BJ (cell line): ENCODE measurements at regions of chr5 and their contacts with region 1.

Region 1: GRCh38 chr5:150801117-150801927 is 22.8 kb downstream of the SMIM3 start:
- DNase-seq: peak; percentile 26
- H3K4me3 ChIP-seq: peak overlapping the region; percentile 10; the same call in 1 of the 2 replicates
- H3K27me3 ChIP-seq: no peaks in the 10 kb centered on the region
- CTCF ChIP-seq: peak; percentile 67

Region 2: GRCh38 chr5:150665044-150665443 is 136.3 kb before region 1 on chr5:
- CTCF ChIA-PET with region 1: no interaction called
- POLR2A ChIA-PET with region 1: no interaction called
- DNase-seq: no peak
- H3K4me3 ChIP-seq: no peak overlapping the region
- H3K27me3 ChIP-seq: peaks cover 13% of the 10 kb centered on the region
- CTCF ChIP-seq: no peak

Region 3: DNA sequence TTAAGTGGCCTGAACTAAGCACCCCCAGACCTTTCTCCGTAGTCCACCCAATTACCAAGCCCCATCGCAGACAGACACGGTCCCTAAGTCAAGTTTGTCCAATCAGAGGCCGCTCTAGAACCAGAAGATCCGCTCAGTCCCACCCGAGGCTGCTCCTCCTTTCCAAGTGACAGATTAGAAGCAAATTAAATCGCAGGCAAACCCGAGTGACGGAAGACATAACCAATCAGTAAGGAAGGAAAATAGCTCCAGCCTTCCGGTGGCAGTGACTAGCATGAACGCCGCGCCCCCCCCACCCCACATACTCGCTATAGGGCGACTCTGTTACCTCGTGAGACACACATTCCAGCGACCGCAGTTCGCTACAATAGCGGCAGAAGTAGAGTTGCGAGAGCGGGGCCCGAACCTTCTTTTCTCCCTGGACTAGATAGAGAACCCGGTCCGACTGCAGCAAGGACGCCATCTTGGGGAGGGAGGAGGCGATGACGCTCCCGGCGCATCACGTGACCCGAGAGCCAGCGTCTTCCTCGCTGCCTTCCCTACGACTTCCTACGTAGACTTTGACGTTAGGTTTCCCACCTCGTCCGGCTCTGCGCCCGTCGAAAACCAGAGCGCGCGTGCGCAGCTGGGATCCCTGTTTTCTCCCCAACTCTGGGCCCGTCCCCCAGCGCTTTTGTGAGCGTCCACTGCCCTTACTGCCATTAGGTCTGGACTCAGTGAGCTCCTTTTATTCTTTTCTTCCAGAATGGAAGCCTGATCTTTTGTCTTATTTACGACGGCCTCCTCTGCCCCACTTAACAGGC is 42.6 kb before region 1 on chr5 and contains the start of gene DCTN4:
- CTCF ChIA-PET with region 1: interaction called, 13 read pairs
- POLR2A ChIA-PET with region 1: no interaction called
- DNase-seq: peak; percentile 96
- H3K4me3 ChIP-seq: peak within 1 kb of the TSS; percentile 65
- H3K27me3 ChIP-seq: no peaks in the 10 kb centered on the region
- CTCF ChIP-seq: no peak
- polyA plus RNA-seq, gene DCTN4: 50.2 and 54.8 TPM in 2 replicates

Region 4: DNA sequence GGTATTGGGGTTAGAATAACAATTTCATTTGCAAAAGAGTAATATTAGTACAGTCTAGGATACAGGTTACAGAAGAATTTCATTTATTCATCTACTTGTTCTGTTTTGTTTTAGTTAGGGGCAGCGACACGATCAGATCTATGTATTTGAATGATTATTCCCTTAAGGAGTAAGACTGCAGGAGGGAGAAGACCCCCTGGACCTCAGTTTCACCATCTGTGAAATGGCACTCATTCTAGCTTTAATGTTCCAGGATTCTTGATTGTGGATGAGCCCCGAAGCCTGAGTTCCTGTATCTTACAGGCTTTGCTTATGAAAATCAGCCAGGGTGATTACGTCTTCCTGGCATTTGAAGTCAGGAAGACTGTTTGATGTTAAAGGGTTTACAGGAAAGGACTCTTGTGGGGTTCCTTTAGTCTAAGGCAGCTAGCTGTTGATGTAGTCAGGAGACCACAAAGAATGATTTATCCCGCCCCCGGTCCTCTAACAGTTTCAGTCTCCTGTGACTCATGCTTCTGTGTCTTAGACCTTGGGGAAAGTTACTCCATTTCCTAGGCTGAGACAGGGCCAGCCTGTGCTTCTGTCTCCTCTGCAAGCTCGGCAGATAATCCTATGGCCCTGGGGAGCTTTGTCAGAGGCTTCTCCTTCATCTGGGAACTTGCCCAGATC is 11.2 kb before region 1 on chr5:
- CTCF ChIA-PET with region 1: interaction called, 36 read pairs
- POLR2A ChIA-PET with region 1: no interaction called
- DNase-seq: peak; percentile 92
- H3K4me3 ChIP-seq: no peak overlapping the region
- H3K27me3 ChIP-seq: no peaks in the 10 kb centered on the region
- CTCF ChIP-seq: no peak

Region 5: DNA sequence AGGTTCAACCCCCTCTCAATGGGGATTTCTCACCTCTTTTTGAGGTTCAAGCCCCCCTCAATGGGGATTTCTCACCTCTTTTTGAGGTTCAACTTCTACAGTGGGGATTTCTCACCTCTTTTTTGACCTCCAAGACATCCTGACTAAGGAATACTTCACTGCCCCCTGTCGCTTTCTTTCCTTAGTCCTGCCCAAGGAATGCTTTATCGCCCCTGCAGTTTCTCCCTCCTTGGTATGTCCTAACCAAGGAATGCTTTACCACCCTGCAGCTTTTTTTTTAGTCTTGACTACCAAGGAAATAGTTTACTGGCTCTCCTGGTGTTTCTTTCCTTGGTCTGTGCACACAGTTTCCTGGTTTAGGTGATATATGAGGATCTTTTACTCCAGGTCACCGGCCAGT is 35.4 kb after region 1 on chr5:
- CTCF ChIA-PET with region 1: interaction called, 5 read pairs
- POLR2A ChIA-PET with region 1: interaction called, 10 read pairs
- DNase-seq: no peak
- H3K4me3 ChIP-seq: no peak overlapping the region
- H3K27me3 ChIP-seq: peaks cover 6% of the 10 kb centered on the region
- CTCF ChIP-seq: no peak

Region 6: DNA sequence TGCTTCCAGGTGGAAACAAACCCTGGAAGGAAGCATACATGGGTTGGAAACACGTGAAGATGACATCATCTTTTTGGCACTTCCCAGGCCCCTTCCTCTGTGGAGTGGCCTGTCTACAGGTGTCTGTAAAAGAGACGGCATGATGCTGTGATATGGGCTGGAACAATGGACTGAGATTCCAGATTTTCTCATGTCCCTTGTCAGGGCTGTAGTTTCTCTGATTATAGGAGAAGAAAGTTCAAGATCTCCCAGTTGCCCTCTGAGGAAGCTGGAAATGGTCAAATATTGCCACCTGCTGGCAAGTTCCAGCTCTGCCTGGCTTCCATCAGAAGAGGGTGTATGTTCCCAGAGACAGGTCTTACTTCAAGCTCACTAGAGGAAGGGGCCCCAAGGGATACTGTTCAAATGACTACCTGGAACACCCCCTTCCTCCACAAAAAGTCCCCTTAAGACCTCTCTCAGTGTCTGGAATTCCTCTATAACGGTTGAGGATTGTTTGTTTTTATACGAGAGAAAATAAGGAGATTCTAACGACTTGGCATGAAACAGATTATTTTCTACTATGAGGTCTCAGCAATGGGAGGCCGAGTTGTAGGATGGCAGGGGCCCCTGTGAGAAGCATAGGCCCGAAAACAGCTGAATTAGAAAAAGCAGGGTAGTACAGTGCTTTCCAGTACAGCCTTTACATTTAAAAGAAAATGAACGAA is 363.5 kb after region 1 on chr5:
- CTCF ChIA-PET with region 1: interaction called, 11 read pairs
- POLR2A ChIA-PET with region 1: no interaction called
- DNase-seq: no peak
- H3K4me3 ChIP-seq: no peak overlapping the region
- H3K27me3 ChIP-seq: peaks cover 1% of the 10 kb centered on the region; the same call in 1 of the 2 replicates
- CTCF ChIP-seq: peak; percentile 92